ENCODE measurements at regions of chr10 and their contacts with region 1.

Region 1: GRCh38 chr10:26860443-26861204 is at the start of gene ABI1:
- DNase-seq: peak; percentile 96 to 99 (median 98)
- ATAC-seq: peak; percentile 97 to 99 (median 98)
- H3K4me3 ChIP-seq: peak within 1 kb of the TSS; percentile 51 to 100 (median 95)
- H3K27ac ChIP-seq: peak within 1 kb of the TSS; percentile 27 to 100 (median 96)
- H3K4me1 ChIP-seq: peaks cover 6 to 48% (median 29%) of the 10 kb centered on the region in 12 donors
- H3K27me3 ChIP-seq: no peaks in the 10 kb centered on the region
- CTCF ChIP-seq: no peak
- POLR2A ChIP-seq: peak; percentile 71 to 97
- total RNA-seq, gene ABI1: 17.0 to 50.0 (median 29.2) TPM

Region 2: DNA sequence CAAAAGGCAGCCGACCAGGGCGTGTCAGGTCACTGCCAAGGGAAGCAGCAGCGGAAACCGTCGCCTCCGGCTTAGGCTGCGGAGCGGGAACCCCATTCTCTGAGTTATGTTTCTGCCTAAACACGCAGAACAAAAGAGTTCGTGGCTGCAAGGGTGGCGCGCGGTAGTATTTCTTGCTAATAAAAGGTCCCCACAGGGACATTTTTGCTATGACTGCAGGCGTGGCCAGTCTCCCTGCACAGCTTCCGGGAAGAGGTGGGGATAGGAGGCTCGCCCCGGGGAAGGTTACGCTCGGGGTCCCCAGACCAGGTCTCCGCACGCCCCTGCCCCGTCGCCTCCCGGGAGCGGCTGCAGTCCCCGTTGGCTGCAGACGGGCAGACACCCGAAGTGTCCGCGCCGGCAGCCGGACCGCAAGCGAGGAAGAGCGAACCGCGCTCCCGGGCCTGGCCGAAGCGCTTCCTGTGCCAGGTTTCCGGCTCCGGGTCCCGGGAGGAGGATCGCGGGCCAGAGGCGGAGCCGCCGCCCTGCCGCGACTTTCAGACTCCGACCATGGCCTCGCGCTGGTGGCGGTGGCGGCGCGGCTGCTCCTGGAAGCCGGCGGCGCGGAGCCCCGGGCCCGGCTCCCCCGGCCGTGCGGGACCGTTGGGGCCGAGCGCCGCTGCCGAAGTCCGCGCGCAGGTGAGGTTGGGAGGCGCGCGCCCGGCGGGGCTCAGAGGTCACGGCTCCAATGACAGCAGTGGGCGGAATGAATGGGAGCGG is 163.3 kb before region 1 on chr10 and contains the start of gene PDSS1:
- intact Hi-C with region 1: loop called in 2 of 10 experiments (anchors 5 to 10 kb)
- DNase-seq: peak; percentile 77 to 88 (median 83)
- ATAC-seq: peak; percentile 84 to 97 (median 95)
- H3K4me3 ChIP-seq: peak within 1 kb of the TSS; percentile 56 to 99 (median 91)
- H3K27ac ChIP-seq: peak within 1 kb of the TSS; percentile 89 to 100 (median 96)
- H3K4me1 ChIP-seq: peaks cover 0 to 22% (median 9%) of the 10 kb centered on the region in 12 donors
- H3K27me3 ChIP-seq: peaks cover 0 to 7% (median 4%) of the 10 kb centered on the region in 9 donors
- CTCF ChIP-seq: no peak
- POLR2A ChIP-seq: peak in 1 of 2 donors; percentile 71
- total RNA-seq, gene PDSS1: 1.8 to 7.3 (median 4.3) TPM

Region 3: GRCh38 chr10:26725837-26726727 is 134.5 kb before region 1 on chr10:
- intact Hi-C with region 1: loop called in 2 of 10 experiments (anchors 5 kb)
- DNase-seq: peak; percentile 47 to 72 (median 56)
- ATAC-seq: peak in 2 of 4 donors; percentile 58 to 63
- H3K4me3 ChIP-seq: no peak overlapping the region
- H3K27ac ChIP-seq: no peak overlapping the region
- H3K4me1 ChIP-seq: no peaks in the 10 kb centered on the region
- H3K27me3 ChIP-seq: no peaks in the 10 kb centered on the region
- CTCF ChIP-seq: peak; percentile 68 to 90 (median 85)
- POLR2A ChIP-seq: no peak

Region 4: DNA sequence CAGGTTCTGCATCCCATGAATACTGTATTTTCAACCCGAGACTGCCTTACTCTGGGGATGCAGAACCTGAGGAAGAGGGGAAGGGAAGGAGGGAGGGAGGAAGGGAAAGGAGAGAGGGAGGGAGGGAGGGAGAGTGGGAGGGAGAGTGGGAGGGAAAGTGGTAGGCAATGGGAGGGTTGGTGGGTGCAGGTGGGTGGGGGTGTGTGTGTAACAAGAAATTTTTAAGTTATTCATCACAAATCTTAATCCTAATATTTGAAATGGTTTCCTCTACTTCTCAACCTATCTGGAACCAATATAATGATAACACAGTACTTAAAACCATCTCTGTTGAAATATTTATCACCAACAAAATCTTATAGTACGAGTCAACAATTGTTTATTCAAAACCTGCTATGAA is 95.1 kb before region 1 on chr10:
- intact Hi-C with region 1: loop called in 1 of 10 experiments (anchors 10 kb)
- DNase-seq: no peak
- ATAC-seq: no peak
- H3K4me3 ChIP-seq: no peak overlapping the region
- H3K27ac ChIP-seq: no peak overlapping the region
- H3K4me1 ChIP-seq: no peaks in the 10 kb centered on the region
- H3K27me3 ChIP-seq: no peaks in the 10 kb centered on the region
- CTCF ChIP-seq: no peak
- POLR2A ChIP-seq: no peak

Region 5: GRCh38 chr10:26792758-26793495 is 67.7 kb before region 1 on chr10:
- intact Hi-C with region 1: no loop called
- DNase-seq: no peak
- ATAC-seq: no peak
- H3K4me3 ChIP-seq: no peak overlapping the region
- H3K27ac ChIP-seq: peak overlapping the region in 6 of 12 donors; percentile 4 to 40 (median 12)
- H3K4me1 ChIP-seq: peaks cover 0 to 29% (median 14%) of the 10 kb centered on the region in 12 donors
- H3K27me3 ChIP-seq: no peaks in the 10 kb centered on the region
- CTCF ChIP-seq: no peak
- POLR2A ChIP-seq: no peak

Region 6: DNA sequence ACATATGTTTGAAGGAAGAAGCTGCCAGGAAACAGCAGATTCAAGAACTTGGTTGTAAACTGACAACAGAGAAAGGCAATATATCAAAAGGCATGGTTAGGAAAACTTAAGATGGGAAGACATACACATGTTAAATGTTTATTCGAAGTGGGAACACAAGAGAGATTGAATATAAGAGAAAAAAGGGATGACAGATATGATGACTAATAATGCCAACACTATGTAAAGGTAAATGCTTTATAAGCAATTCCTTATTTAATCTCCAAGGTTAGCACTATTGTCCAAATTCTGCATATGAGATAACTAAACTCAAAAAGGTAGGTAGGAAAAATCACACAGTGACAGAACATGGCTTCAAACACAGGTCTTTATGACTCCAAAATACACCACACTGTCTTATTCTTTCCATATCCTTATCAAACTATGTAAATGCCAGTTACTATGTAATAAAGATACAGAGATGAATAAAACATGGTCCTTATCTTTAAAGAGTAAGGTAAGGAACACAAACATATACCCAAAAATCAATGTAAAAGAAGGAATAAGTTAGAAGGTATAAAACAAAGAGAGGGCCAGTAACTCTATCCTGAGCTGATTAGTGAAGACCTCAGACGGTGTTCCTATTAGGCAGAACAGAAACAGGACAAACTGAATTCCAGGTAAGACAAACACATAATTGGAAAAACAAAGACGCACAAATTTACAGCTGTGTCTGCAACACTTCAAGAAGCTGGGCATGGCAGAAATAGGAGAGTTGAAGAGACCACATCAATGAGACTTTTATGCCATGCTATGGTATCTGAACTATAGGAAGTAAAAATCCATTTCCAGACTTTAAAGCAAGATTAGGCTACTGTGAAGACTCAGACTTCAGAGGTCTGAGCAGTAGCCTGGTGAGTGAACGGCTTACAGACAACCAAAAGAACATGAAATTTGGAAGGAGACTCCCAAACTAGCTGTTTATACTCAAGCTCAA is 55.9 kb before region 1 on chr10:
- intact Hi-C with region 1: loop called in 1 of 10 experiments (anchors 5 kb)
- DNase-seq: no peak
- ATAC-seq: no peak
- H3K4me3 ChIP-seq: no peak overlapping the region
- H3K27ac ChIP-seq: peak overlapping the region in 1 of 12 donors; percentile 18
- H3K4me1 ChIP-seq: peaks cover 0 to 59% (median 40%) of the 10 kb centered on the region in 12 donors
- H3K27me3 ChIP-seq: no peaks in the 10 kb centered on the region
- CTCF ChIP-seq: no peak
- POLR2A ChIP-seq: no peak

Region 7: GRCh38 chr10:27155066-27155754 is 294.6 kb after region 1 on chr10 and contains the start of gene MASTL:
- intact Hi-C with region 1: loop called in 1 of 10 experiments (anchors 10 kb)
- DNase-seq: peak; percentile 93 to 96 (median 95)
- ATAC-seq: peak; percentile 96
- H3K4me3 ChIP-seq: peak within 1 kb of the TSS; percentile 69 to 95 (median 83)
- H3K27ac ChIP-seq: peak within 1 kb of the TSS; percentile 95 to 100 (median 99)
- H3K4me1 ChIP-seq: peaks cover 0 to 47% (median 25%) of the 10 kb centered on the region in 12 donors
- H3K27me3 ChIP-seq: no peaks in the 10 kb centered on the region
- CTCF ChIP-seq: no peak
- POLR2A ChIP-seq: peak; percentile 78 to 89
- total RNA-seq, gene MASTL: 1.4 to 6.1 (median 2.3) TPM